PC-9 (cell line): ENCODE measurements at regions of chr11 and their contacts with region 1.

Region 1: DNA sequence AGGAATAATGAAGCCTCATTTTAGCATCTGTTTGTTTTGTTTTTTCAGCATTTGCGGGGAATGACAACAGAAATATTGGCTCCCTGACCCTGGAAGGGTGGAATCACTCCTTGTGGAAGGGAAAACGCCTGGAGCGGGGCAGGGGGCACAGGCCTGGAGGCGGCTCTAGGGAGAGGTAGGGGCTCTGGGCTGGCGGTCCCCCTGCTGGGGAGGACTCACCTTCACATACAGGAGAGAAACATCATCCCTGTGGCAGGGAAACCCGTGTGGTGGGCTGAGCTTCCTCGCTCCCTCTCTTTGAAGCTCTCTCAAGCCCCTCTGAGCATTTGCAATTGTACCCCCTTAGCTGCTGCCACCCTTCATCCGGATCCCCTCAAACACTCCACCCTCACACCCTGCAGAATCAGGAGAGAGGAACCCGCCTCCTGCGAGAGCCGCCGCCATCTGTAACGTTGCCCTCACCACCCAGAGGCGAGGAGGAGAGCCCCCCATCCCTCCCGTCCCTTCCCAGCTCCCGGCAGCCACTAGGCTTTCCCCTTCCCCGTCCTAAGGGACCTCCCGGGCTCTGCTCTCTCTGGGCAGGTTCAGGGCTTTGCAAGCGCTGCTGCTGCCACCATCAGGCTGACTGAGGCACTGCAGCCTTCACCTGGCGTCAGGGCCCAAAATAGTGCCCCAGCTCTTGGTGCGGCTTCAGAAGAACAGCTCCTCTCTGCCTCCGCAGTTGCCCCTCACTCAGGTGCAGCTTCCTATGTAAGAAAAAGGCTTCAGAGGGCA is 10.4 kb downstream of the KIRREL3 start:
- DNase-seq: peak in 1 of 2 experiments; percentile 71
- H3K4me3 ChIP-seq: no peak overlapping the region
- H3K27ac ChIP-seq: no peak overlapping the region
- H3K4me1 ChIP-seq: no peaks in the 10 kb centered on the region
- H3K27me3 ChIP-seq: peaks cover 54% of the 10 kb centered on the region
- CTCF ChIP-seq: peak; percentile 92

Region 2: GRCh38 chr11:126318574-126319373 is 671.4 kb before region 1 on chr11:
- CTCF ChIA-PET with region 1: interaction called, 18 read pairs
- POLR2A ChIA-PET with region 1: no interaction called
- intact Hi-C with region 1: loop called (anchors 5 kb)
- DNase-seq: no peak
- H3K4me3 ChIP-seq: no peak overlapping the region
- H3K27ac ChIP-seq: no peak overlapping the region
- H3K4me1 ChIP-seq: no peaks in the 10 kb centered on the region
- H3K27me3 ChIP-seq: no peaks in the 10 kb centered on the region
- CTCF ChIP-seq: no peak

Region 3: GRCh38 chr11:126607374-126607773 is 382.8 kb before region 1 on chr11:
- CTCF ChIA-PET with region 1: interaction called, 3 read pairs
- POLR2A ChIA-PET with region 1: no interaction called
- intact Hi-C with region 1: loop called (anchors 1 kb)
- DNase-seq: peak in 1 of 2 experiments; percentile 55
- H3K4me3 ChIP-seq: no peak overlapping the region
- H3K27ac ChIP-seq: no peak overlapping the region
- H3K4me1 ChIP-seq: no peaks in the 10 kb centered on the region
- H3K27me3 ChIP-seq: peaks cover 97% of the 10 kb centered on the region
- CTCF ChIP-seq: peak; percentile 73

Region 4: DNA sequence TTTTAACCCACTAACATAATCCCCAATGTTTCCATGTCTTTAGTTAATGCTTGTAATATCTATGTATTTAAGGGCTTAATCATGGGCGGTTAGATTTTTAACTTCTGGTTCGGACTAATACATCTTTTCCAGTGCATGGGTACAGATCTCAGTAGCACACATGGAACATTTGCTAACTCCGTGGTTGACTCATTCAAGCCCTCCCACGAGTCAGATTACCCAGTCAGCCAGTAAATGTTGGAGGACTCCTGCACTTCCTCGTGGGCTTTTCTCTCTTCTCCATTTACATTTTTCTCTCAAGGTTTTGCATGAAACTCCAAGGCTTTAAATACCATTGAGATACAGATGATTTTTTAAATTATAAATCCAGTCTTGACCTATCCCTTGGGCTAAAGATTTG is 320.7 kb before region 1 on chr11:
- CTCF ChIA-PET with region 1: no interaction called
- POLR2A ChIA-PET with region 1: no interaction called
- intact Hi-C with region 1: no loop called
- DNase-seq: no peak
- H3K4me3 ChIP-seq: no peak overlapping the region
- H3K27ac ChIP-seq: no peak overlapping the region
- H3K4me1 ChIP-seq: no peaks in the 10 kb centered on the region
- H3K27me3 ChIP-seq: peaks cover 62% of the 10 kb centered on the region
- CTCF ChIP-seq: no peak

Region 5: DNA sequence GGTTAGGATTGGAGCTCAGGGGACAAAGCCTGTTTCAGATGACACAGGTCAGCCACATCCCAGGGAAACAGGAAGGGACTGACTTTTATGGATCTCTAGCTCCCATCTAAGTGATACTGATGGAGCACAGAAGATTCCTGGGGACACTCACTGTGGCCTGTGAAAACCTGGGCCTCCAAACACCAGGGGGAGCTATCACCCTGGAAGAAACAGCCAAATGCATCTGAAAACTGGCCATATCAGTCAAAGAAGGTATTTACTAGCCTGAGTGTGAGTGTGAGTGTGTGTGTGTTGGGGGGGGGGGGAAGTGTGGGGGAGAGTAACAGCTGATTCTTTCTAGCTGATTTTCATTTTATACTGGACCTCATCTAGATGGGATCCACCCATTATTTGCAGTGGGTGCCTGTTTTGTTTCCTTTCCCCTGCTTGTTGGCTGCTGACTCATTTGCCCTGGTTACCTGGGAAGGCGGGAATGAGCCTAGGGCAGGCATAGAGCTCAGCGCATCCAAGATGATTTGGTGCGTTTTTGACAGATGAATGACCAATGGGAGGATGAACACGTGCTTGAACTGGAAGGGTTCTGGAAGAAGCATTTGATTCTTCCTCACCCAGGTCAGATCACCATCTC is 273.6 kb before region 1 on chr11:
- CTCF ChIA-PET with region 1: interaction called, 8 read pairs
- POLR2A ChIA-PET with region 1: no interaction called
- intact Hi-C with region 1: loop called (anchors 1 kb)
- DNase-seq: peak in 1 of 2 experiments; percentile 30
- H3K4me3 ChIP-seq: no peak overlapping the region
- H3K27ac ChIP-seq: no peak overlapping the region
- H3K4me1 ChIP-seq: no peaks in the 10 kb centered on the region
- H3K27me3 ChIP-seq: peaks cover 82% of the 10 kb centered on the region
- CTCF ChIP-seq: peak; percentile 63

Region 6: GRCh38 chr11:126862664-126863243 is 127.4 kb before region 1 on chr11:
- CTCF ChIA-PET with region 1: no interaction called
- POLR2A ChIA-PET with region 1: no interaction called
- intact Hi-C with region 1: no loop called
- DNase-seq: no peak
- H3K4me3 ChIP-seq: no peak overlapping the region
- H3K27ac ChIP-seq: no peak overlapping the region
- H3K4me1 ChIP-seq: no peaks in the 10 kb centered on the region
- H3K27me3 ChIP-seq: peaks cover 24% of the 10 kb centered on the region
- CTCF ChIP-seq: no peak

Region 7: GRCh38 chr11:126917531-126918204 is 72.5 kb before region 1 on chr11:
- CTCF ChIA-PET with region 1: no interaction called
- POLR2A ChIA-PET with region 1: interaction called, 8 read pairs
- intact Hi-C with region 1: loop called (anchors 5 kb)
- DNase-seq: peak; percentile 53 to 58
- H3K4me3 ChIP-seq: no peak overlapping the region
- H3K27ac ChIP-seq: no peak overlapping the region
- H3K4me1 ChIP-seq: no peaks in the 10 kb centered on the region
- H3K27me3 ChIP-seq: no peaks in the 10 kb centered on the region
- CTCF ChIP-seq: no peak

Region 8: GRCh38 chr11:127074151-127074761 is 84.1 kb after region 1 on chr11:
- CTCF ChIA-PET with region 1: no interaction called
- POLR2A ChIA-PET with region 1: no interaction called
- intact Hi-C with region 1: loop called (anchors 1 kb)
- DNase-seq: peak; percentile 37 to 59
- H3K4me3 ChIP-seq: no peak overlapping the region
- H3K27ac ChIP-seq: no peak overlapping the region
- H3K4me1 ChIP-seq: no peaks in the 10 kb centered on the region
- H3K27me3 ChIP-seq: peaks cover 33% of the 10 kb centered on the region
- CTCF ChIP-seq: no peak; the same call in 1 of the 2 replicates

Region 9: GRCh38 chr11:128716661-128717210 is 1726.6 kb after region 1 on chr11:
- CTCF ChIA-PET with region 1: no interaction called
- POLR2A ChIA-PET with region 1: no interaction called
- intact Hi-C with region 1: no loop called
- DNase-seq: peak in 1 of 2 experiments; percentile 59
- H3K4me3 ChIP-seq: no peak overlapping the region
- H3K27ac ChIP-seq: no peak overlapping the region
- H3K4me1 ChIP-seq: no peaks in the 10 kb centered on the region
- H3K27me3 ChIP-seq: no peaks in the 10 kb centered on the region
- CTCF ChIP-seq: no peak